AG04450 (cell line): ENCODE measurements at regions of chr17 and their contacts with region 1.

Region 1: GRCh38 chr17:4074831-4075495 is 67.9 kb downstream of the ZZEF1 start:
- DNase-seq: peak; percentile 7
- H3K4me3 ChIP-seq: no peak overlapping the region
- H3K27ac ChIP-seq: no peak overlapping the region
- H3K27me3 ChIP-seq: no peaks in the 10 kb centered on the region
- CTCF ChIP-seq: peak; percentile 78

Region 2: DNA sequence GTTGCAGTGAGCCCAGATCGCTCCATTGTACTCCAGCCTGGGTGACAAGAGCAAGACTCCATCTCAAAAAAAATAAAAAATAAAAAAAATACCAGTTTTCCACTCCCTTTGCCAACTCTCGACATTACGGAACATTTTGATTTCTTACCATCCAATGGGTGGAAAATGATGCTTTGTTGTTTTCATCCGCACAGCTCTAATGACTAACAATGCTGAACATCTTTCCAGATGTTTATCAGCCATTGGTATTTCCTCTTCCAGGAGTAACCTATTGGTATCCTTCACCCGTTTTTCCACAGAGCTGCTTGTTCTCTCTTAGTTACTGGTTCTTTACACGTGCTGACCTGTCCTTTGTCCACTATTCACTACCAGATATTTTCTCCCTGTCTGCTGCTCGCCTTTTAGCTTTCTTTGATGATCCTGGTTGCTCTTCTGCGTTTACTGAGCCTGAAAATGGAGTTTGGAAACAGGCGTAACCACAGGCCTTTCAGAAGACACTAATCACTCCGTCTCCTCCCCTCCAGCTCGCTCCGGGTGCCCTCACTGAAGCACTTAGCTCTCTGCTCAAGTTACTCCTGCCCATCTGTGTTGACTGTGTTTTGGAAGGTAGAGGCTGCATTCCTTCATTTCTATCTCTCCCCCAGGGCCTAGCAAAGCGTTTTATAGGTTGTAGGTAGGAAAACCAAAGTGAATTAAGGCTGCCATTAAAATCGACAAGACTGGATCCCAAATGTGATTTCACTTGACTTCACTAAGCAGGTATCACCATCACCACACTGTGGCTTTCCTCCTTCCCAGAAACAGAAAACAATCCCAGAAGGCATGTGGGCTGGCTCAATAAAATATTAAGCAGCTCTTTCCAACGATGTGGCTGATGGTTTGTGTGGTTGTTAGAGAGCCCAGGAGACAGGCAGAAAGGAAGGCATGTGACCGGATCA is 447.9 kb before region 1 on chr17:
- CTCF ChIA-PET with region 1: no interaction called
- POLR2A ChIA-PET with region 1: no interaction called
- DNase-seq: no peak
- H3K4me3 ChIP-seq: no peak overlapping the region
- H3K27ac ChIP-seq: no peak overlapping the region
- H3K27me3 ChIP-seq: no peaks in the 10 kb centered on the region
- CTCF ChIP-seq: no peak

Region 3: GRCh38 chr17:3865176-3865575 is 209.8 kb before region 1 on chr17:
- CTCF ChIA-PET with region 1: interaction called, 14 read pairs
- POLR2A ChIA-PET with region 1: no interaction called
- DNase-seq: no peak
- H3K4me3 ChIP-seq: no peak overlapping the region
- H3K27ac ChIP-seq: no peak overlapping the region
- H3K27me3 ChIP-seq: no peaks in the 10 kb centered on the region
- CTCF ChIP-seq: no peak

Region 4: DNA sequence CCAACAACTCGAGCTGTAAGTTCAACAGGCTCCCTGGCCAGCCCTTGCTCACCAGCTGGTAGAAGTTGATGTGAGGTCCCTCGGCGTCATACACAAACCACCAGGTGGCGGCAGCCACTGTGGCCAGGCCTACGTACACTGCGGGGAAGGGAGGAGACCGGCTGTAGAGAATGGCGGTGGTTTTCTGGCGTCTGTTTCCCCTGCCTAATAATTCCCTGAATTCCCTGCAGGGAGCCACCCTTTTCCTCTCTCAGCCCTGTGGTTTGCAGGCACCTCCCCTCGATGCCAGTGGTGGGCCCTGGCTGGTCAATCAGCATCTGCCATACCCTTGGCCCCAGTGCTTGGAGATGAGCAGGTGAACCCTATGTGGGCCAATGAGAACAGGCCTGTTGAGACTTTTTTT is 139.8 kb before region 1 on chr17:
- CTCF ChIA-PET with region 1: interaction called, 22 read pairs
- POLR2A ChIA-PET with region 1: no interaction called
- DNase-seq: peak; percentile 37
- H3K4me3 ChIP-seq: no peak overlapping the region
- H3K27ac ChIP-seq: no peak overlapping the region
- H3K27me3 ChIP-seq: no peaks in the 10 kb centered on the region
- CTCF ChIP-seq: peak; percentile 74

Region 5: GRCh38 chr17:4057731-4058130 is 17.2 kb before region 1 on chr17:
- CTCF ChIA-PET with region 1: interaction called, 14 read pairs
- POLR2A ChIA-PET with region 1: no interaction called
- DNase-seq: no peak
- H3K4me3 ChIP-seq: no peak overlapping the region
- H3K27ac ChIP-seq: no peak overlapping the region
- H3K27me3 ChIP-seq: no peaks in the 10 kb centered on the region
- CTCF ChIP-seq: no peak